ENCODE measurements at regions of chr6 and their contacts with region 1.

Region 1: DNA sequence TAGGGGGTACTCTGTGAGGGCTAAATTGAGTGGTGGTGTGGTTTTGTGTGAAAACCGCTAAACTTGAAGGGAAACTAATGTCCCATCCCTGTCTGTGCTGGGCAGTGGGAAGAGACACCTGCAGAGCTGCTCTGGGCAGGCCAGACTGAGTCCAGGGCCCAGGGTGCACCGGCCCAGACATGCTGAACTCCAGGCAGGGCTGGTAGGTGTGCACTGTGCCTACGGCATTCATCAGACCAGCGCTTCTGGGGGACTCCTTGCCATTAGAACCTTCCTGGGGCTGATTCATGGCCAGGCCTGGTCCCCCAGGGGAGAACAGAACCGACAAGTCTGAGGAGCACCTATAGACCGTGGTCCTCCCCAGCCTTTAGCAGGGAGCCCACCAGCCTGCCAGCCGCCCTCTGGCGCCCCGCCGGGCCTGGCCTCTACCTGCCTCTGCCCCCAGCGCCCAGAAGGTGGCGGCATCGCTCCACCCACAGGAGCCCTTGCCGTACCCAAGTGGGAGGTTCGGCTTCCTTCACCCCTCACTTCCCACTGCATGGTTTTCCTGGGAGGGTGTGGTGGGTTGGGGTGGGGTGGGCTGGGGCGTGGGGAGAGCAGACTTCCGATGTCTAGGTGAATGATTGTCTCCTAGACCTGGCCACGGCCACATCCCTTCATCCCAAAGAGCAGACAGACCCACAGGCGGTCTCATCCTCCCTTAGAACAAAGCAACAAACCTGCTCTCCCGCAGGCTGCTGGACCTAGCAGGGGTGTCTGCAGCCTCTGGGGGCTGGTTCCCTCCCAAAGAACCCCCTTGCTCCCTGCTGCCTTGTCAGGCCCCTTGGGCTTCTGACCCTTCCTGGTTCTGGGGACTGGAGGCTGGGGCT is 15.5 kb downstream of the CCDC167 start:
- DNase-seq: no peak
- H3K4me3 ChIP-seq: no peak overlapping the region
- H3K27ac ChIP-seq: no peak overlapping the region
- H3K4me1 ChIP-seq: peaks cover 0 to 5% (median 0%) of the 10 kb centered on the region in 4 donors
- H3K27me3 ChIP-seq: no peaks in the 10 kb centered on the region
- CTCF ChIP-seq: peak; percentile 54 to 71

Region 2: DNA sequence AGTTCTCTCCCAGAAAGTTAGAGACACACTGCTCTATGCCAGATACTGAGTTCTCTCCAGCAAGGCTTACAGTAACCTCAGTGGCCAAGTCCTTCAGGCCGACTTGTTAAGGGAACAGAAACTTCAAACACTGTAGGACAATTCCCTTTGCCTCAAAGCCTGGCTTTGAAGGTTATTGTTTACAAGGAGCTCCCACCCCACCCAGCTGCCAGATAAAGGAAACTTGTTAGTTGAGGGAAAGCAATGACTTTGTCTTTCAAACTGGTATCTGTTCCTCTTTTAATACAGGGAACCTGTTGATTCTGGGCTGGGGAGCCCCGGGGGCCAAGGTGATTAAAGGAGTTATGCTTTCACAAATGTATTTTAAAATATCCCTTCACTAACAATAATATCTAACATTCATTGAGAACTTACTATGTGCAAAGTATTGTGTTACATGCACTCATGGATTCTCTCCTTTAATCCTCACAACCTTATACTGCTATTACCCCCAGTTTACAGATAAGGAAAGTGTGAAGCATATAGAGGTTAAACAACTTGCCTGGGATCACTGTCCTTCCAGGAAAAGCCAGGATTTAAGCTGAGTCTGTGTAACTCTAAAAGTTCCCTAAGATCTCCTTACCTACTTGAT is 833.2 kb before region 1 on chr6:
- intact Hi-C with region 1: no loop called
- DNase-seq: no peak
- H3K4me3 ChIP-seq: no peak overlapping the region
- H3K27ac ChIP-seq: no peak overlapping the region
- H3K4me1 ChIP-seq: peaks cover 0 to 5% (median 0%) of the 10 kb centered on the region in 4 donors
- H3K27me3 ChIP-seq: peaks cover 0 to 14% of the 10 kb centered on the region in 2 donors
- CTCF ChIP-seq: no peak

Region 3: DNA sequence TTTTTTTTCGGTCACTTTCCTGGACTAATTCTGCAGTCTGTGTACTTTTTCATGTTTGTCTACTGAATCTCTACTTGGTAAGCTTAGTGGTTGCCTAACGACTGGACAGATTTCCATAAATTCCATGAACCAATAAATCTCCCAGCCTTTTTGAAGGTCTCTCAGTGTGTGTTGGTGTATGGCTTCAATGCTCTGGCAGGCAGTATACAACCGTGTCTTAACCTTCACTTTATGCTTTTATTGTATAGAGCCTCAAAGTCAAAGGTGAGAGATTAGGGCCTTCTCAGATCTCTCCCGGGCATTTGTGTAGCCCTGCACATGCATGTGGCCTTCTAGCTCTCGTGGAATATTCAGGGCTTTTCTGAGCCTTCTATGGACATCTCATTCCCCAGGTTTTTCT is 65.4 kb before region 1 on chr6:
- intact Hi-C with region 1: no loop called
- DNase-seq: no peak
- H3K4me3 ChIP-seq: no peak overlapping the region
- H3K27ac ChIP-seq: no peak overlapping the region
- H3K4me1 ChIP-seq: no peaks in the 10 kb centered on the region
- H3K27me3 ChIP-seq: no peaks in the 10 kb centered on the region
- CTCF ChIP-seq: no peak

Region 4: GRCh38 chr6:37691904-37692806 is 208.0 kb after region 1 on chr6:
- intact Hi-C with region 1: loop called (anchors 5 kb)
- DNase-seq: peak; percentile 61 to 77
- H3K4me3 ChIP-seq: no peak overlapping the region
- H3K27ac ChIP-seq: no peak overlapping the region
- H3K4me1 ChIP-seq: peaks cover 0 to 25% (median 17%) of the 10 kb centered on the region in 4 donors
- H3K27me3 ChIP-seq: no peaks in the 10 kb centered on the region
- CTCF ChIP-seq: peak; percentile 91 to 96

Measured in tibial artery (tissue), 4 donors.